Endothelial cell of umbilical vein (primary cell): ENCODE measurements at regions of chr15 and their contacts with region 1.

Region 1: GRCh38 chr15:40593588-40594428 is at the start of gene KNL1:
- DNase-seq: peak; percentile 100
- H3K4me3 ChIP-seq: peak within 1 kb of the TSS; percentile 52 to 99 (median 99)
- H3K27ac ChIP-seq: peak within 1 kb of the TSS; percentile 99
- H3K4me1 ChIP-seq: peaks cover 8% of the 10 kb centered on the region
- H3K27me3 ChIP-seq: peaks cover under 1 to 3% of the 10 kb centered on the region in 2 experiments
- CTCF ChIP-seq: no peak
- POLR2A ChIP-seq: peak; percentile 83
- total RNA-seq, gene KNL1: 31.8 and 33.8 TPM in 2 replicates

Region 2: GRCh38 chr15:40525855-40526254 is 68.0 kb before region 1 on chr15:
- CTCF ChIA-PET with region 1: no interaction called
- POLR2A ChIA-PET with region 1: no interaction called
- dilution Hi-C with region 1: no loop called
- intact Hi-C with region 1: no loop called
- DNase-seq: no peak
- H3K4me3 ChIP-seq: no peak overlapping the region
- H3K27ac ChIP-seq: no peak overlapping the region
- H3K4me1 ChIP-seq: no peaks in the 10 kb centered on the region
- H3K27me3 ChIP-seq: no peaks in the 10 kb centered on the region
- CTCF ChIP-seq: no peak
- POLR2A ChIP-seq: no peak

Region 3: GRCh38 chr15:40564591-40565332 is 29.0 kb before region 1 on chr15 and contains the start of gene CCDC32:
- CTCF ChIA-PET with region 1: interaction called, 37 read pairs
- POLR2A ChIA-PET with region 1: interaction called, 6 read pairs
- dilution Hi-C with region 1: no loop called
- intact Hi-C with region 1: loop called (anchors 2 kb)
- DNase-seq: peak; percentile 99
- H3K4me3 ChIP-seq: peak within 1 kb of the TSS; percentile 62 to 90 (median 86)
- H3K27ac ChIP-seq: peak within 1 kb of the TSS; percentile 80
- H3K4me1 ChIP-seq: peaks cover 13% of the 10 kb centered on the region
- H3K27me3 ChIP-seq: no peaks in the 10 kb centered on the region
- CTCF ChIP-seq: no peak
- POLR2A ChIP-seq: peak; percentile 91
- total RNA-seq, gene CCDC32: 22.9 and 28.8 TPM in 2 replicates

Region 4: DNA sequence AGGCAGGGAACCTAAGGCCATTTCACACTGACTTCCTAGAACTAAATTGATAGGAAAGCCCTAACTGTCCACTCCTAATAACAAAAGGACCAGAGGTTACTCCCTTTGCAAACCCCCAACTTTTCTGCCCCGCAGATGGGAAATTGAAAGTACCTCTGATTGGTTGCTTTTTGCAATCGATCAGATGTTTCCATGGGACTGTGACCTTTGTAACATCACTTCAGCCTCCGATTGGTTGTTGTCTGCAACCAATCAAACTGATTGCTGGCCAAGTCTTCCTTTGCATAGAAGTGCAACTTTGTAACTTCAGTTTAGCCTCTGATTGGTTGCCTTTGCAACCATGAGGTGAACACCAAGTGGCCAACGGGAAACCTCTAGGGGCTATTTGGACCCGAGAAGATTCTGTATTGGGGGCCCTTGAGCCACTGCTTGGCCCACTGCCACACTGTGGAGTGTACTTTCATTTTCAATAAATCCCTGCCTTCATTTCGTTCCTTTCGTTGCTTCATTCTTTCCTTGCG is 11.0 kb before region 1 on chr15:
- CTCF ChIA-PET with region 1: interaction called, 28 read pairs
- POLR2A ChIA-PET with region 1: no interaction called
- dilution Hi-C with region 1: no loop called
- intact Hi-C with region 1: loop called (anchors 1 kb)
- DNase-seq: peak; percentile 10
- H3K4me3 ChIP-seq: peak overlapping the region in 1 of 3 experiments; percentile 8
- H3K27ac ChIP-seq: no peak overlapping the region
- H3K4me1 ChIP-seq: no peaks in the 10 kb centered on the region
- H3K27me3 ChIP-seq: no peaks in the 10 kb centered on the region
- CTCF ChIP-seq: no peak
- POLR2A ChIP-seq: no peak

Region 5: GRCh38 chr15:40694688-40695468 is 101.1 kb after region 1 on chr15 and contains the start of gene RAD51:
- CTCF ChIA-PET with region 1: interaction called, 10 read pairs
- POLR2A ChIA-PET with region 1: interaction called, 3 read pairs
- dilution Hi-C with region 1: no loop called
- intact Hi-C with region 1: loop called (anchors 5 kb)
- DNase-seq: peak; percentile 95
- H3K4me3 ChIP-seq: peak within 1 kb of the TSS; percentile 69 to 96 (median 92)
- H3K27ac ChIP-seq: peak within 1 kb of the TSS; percentile 86
- H3K4me1 ChIP-seq: peaks cover 13% of the 10 kb centered on the region
- H3K27me3 ChIP-seq: no peaks in the 10 kb centered on the region
- CTCF ChIP-seq: no peak
- POLR2A ChIP-seq: peak; percentile 63
- total RNA-seq, gene RAD51: 29.7 and 30.9 TPM in 2 replicates

Region 6: DNA sequence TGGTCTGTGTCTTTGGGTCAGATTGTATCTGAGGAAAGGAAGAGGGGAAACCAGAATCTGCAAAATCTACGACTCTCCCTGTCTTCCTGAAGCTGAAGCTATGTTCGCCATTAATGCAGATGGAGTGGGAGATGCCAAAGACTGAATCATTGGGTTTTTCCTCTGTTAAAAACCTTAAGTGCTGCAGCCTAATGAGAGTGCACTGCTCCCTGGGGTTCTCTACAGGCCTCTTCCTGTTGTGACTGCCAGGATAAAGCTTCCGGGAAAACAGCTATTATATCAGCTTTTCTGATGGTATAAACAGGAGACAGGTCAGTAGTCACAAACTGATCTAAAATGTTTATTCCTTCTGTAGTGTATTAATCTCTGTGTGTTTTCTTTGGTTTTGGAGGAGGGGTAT is 137.2 kb after region 1 on chr15:
- CTCF ChIA-PET with region 1: interaction called, 12 read pairs
- POLR2A ChIA-PET with region 1: no interaction called
- dilution Hi-C with region 1: no loop called
- intact Hi-C with region 1: no loop called
- DNase-seq: peak; percentile 73
- H3K4me3 ChIP-seq: peak overlapping the region in 1 of 3 experiments; percentile 15
- H3K27ac ChIP-seq: peak overlapping the region; percentile 46
- H3K4me1 ChIP-seq: peaks cover 9% of the 10 kb centered on the region
- H3K27me3 ChIP-seq: no peaks in the 10 kb centered on the region
- CTCF ChIP-seq: no peak
- POLR2A ChIP-seq: no peak

Region 7: DNA sequence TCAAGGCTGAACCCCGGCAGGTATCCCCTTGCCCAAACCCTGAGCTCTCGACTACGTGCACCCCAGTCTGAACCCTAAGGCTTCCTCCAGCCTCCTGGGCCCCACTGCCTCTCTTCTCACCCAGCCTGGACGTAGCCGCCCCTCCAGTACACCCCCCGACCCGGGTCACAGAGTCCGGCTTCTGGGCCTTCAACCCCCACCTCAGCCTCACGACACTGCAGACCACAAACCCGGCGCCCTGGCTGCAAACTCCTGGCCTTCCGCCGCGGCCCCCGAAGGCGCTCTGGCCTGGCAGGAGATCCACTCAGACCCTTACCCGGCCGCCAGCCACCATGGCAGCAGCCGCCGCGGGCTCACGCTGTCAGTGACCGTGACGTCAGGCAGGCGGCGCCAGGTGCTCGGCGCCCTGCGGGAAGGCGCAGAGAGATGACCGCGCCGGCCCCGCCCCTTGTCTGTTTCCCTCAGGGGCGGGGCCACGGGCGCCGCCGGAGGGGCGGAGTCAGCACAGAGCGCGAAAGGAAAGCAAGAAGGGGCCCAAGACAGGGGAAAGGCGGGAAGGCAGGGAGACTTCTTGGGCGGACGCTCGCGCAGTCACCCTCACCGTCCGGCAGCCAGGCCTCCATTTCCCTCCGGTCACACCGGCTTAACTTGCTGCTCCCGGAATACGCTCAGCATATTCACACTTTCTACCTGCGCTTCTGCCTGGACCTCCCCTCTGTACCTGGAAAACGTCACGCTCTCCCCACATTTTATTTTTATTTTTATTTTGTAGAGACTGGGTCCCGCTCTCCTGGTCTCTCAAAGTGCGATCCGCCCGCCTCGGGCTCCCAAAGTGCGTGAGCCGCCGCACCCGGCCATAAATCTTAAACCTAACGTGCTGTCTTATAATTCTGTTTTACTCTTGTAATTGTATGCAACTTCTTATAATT is 161.3 kb after region 1 on chr15 and contains the start of gene RMDN3:
- CTCF ChIA-PET with region 1: no interaction called
- POLR2A ChIA-PET with region 1: no interaction called
- dilution Hi-C with region 1: no loop called
- intact Hi-C with region 1: no loop called
- DNase-seq: peak; percentile 94
- H3K4me3 ChIP-seq: peak within 1 kb of the TSS; percentile 70 to 82 (median 71)
- H3K27ac ChIP-seq: peak within 1 kb of the TSS; percentile 71
- H3K4me1 ChIP-seq: peaks cover 8% of the 10 kb centered on the region
- H3K27me3 ChIP-seq: no peaks in the 10 kb centered on the region
- CTCF ChIP-seq: no peak
- POLR2A ChIP-seq: peak; percentile 81
- total RNA-seq, gene RMDN3: 35.9 and 37.2 TPM in 2 replicates